PC-9 (cell line): ENCODE measurements at regions of chr9 and their contacts with region 1.

Region 1: DNA sequence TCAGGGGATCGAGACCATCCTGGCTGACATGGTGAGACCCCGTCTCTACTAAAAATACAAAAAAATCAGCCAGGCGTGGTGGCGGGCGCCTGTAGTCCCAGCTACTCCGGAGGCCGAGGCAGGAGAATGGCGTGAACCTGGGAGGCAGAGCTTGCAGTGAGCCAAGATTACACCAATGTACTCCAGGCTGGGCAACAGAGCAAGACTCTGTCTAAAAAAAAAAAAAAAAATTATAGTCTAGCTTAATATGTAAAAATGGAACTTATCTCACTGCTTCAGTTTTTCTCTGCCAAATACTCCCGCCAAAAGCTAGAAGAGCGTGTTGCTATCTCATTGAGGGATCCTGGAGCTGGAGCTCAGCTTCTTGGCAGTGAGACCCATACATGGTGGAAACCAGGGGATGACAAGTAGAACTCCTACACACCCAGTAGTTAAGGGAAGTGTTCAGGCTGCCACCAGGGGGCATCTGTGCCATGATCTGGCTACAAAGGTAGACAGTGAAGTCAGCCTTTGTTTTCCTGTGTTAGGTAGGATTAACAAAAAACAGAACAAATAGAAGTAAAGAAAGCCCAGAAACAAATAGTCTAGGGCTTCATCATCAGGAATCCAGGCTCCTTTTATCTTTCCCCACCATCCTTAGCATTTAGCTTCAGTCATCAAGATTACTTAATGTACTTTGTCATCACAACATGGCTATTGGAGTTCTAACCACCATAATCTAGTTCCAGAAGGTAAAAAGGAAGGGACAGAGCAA is 33.6 kb upstream of the GLIPR2 start:
- DNase-seq: peak; percentile 47 to 52
- H3K4me3 ChIP-seq: no peak overlapping the region
- H3K27ac ChIP-seq: peak overlapping the region; percentile 51
- H3K4me1 ChIP-seq: peaks cover 8% of the 10 kb centered on the region
- H3K27me3 ChIP-seq: no peaks in the 10 kb centered on the region
- CTCF ChIP-seq: peak; percentile 67

Region 2: GRCh38 chr9:35954942-35955546 is 147.9 kb before region 1 on chr9:
- CTCF ChIA-PET with region 1: no interaction called
- POLR2A ChIA-PET with region 1: interaction called, 7 read pairs
- intact Hi-C with region 1: loop called (anchors 5 kb)
- DNase-seq: peak; percentile 30 to 56
- H3K4me3 ChIP-seq: no peak overlapping the region
- H3K27ac ChIP-seq: no peak overlapping the region
- H3K4me1 ChIP-seq: peaks cover 13% of the 10 kb centered on the region
- H3K27me3 ChIP-seq: no peaks in the 10 kb centered on the region
- CTCF ChIP-seq: peak; percentile 77

Region 3: DNA sequence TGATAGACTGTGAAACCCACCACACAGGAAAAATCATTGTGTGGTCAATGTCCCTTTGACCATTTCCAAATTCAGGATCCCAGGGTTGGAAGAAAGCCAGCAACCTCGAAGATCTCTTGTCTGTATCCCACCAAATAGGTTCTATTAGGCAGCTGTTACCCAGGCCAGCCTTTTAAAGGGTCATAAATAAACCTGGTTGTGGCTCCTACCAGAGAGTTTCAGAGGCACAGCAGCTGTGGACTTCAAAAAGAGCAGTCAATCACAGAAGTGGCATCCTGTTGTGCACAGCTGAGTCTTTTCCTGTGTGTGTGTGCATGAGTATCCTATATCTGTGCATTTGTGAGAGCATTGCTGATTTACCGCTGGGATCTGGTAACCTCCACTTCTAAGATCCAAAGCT is 121.2 kb before region 1 on chr9:
- CTCF ChIA-PET with region 1: no interaction called
- POLR2A ChIA-PET with region 1: no interaction called
- intact Hi-C with region 1: no loop called
- DNase-seq: no peak
- H3K4me3 ChIP-seq: no peak overlapping the region
- H3K27ac ChIP-seq: no peak overlapping the region
- H3K4me1 ChIP-seq: no peaks in the 10 kb centered on the region
- H3K27me3 ChIP-seq: no peaks in the 10 kb centered on the region
- CTCF ChIP-seq: no peak

Region 4: GRCh38 chr9:36123515-36123914 is 20.6 kb after region 1 on chr9:
- CTCF ChIA-PET with region 1: no interaction called
- POLR2A ChIA-PET with region 1: no interaction called
- intact Hi-C with region 1: no loop called
- DNase-seq: no peak
- H3K4me3 ChIP-seq: no peak overlapping the region
- H3K27ac ChIP-seq: no peak overlapping the region
- H3K4me1 ChIP-seq: no peaks in the 10 kb centered on the region
- H3K27me3 ChIP-seq: no peaks in the 10 kb centered on the region
- CTCF ChIP-seq: no peak

Region 5: GRCh38 chr9:36141288-36141687 is 38.4 kb after region 1 on chr9:
- CTCF ChIA-PET with region 1: no interaction called
- POLR2A ChIA-PET with region 1: interaction called, 3 read pairs
- intact Hi-C with region 1: loop called (anchors 2 kb)
- DNase-seq: peak; percentile 51 to 70
- H3K4me3 ChIP-seq: no peak overlapping the region
- H3K27ac ChIP-seq: no peak overlapping the region
- H3K4me1 ChIP-seq: peaks cover 13% of the 10 kb centered on the region; the same call in 1 of the 2 replicates
- H3K27me3 ChIP-seq: no peaks in the 10 kb centered on the region
- CTCF ChIP-seq: no peak; the same call in 1 of the 2 replicates

Region 6: DNA sequence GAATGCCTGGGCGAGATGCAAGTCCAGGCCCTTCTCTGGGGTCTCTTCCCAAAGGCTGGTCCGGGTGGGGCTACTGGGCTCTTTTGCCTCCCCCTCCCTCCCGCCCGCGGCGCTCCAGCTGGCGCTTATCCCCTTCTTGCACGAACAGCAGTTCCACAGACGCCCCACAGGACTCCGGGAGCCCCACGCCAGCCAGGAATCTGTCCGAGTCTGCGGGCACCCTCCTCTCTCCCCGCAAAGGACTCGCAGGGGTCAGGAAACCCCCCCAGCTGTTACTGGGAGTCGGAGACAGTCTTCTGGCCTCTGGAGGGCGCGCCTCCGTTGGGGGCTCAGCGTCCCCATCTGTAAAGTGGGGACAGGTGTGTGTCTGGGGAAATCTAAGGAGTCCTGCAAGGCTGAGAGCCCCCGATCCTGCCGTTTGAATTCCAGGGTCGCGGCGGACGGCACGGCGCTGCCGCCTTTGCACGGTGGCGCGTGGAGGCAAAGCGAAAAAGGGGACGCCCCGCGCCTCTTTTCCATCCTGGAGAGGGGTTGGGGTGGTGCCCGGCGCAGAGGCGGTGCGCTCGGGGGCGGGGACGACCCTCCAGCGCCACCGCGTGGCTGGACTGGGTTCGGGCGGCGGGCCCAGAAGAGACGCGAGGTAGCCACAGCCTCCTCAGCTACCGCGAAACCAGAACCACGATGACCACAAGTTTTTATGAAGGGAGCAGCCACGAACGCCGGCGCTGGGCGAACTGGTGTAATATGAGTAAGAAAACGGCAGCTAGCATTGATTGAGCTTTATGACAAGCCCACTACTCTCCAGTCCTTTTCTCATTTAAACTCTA is 63.4 kb after region 1 on chr9:
- CTCF ChIA-PET with region 1: interaction called, 4 read pairs
- POLR2A ChIA-PET with region 1: no interaction called
- intact Hi-C with region 1: loop called (anchors 1 kb)
- DNase-seq: peak; percentile 69 to 81
- H3K4me3 ChIP-seq: peak overlapping the region; percentile 37; the same call in 1 of the 2 replicates
- H3K27ac ChIP-seq: no peak overlapping the region
- H3K4me1 ChIP-seq: 0 out of 2 replicates have a peak, but pooled peaks cover 3% of the 10 kb centered on the region
- H3K27me3 ChIP-seq: no peaks in the 10 kb centered on the region
- CTCF ChIP-seq: peak; percentile 79

Region 7: DNA sequence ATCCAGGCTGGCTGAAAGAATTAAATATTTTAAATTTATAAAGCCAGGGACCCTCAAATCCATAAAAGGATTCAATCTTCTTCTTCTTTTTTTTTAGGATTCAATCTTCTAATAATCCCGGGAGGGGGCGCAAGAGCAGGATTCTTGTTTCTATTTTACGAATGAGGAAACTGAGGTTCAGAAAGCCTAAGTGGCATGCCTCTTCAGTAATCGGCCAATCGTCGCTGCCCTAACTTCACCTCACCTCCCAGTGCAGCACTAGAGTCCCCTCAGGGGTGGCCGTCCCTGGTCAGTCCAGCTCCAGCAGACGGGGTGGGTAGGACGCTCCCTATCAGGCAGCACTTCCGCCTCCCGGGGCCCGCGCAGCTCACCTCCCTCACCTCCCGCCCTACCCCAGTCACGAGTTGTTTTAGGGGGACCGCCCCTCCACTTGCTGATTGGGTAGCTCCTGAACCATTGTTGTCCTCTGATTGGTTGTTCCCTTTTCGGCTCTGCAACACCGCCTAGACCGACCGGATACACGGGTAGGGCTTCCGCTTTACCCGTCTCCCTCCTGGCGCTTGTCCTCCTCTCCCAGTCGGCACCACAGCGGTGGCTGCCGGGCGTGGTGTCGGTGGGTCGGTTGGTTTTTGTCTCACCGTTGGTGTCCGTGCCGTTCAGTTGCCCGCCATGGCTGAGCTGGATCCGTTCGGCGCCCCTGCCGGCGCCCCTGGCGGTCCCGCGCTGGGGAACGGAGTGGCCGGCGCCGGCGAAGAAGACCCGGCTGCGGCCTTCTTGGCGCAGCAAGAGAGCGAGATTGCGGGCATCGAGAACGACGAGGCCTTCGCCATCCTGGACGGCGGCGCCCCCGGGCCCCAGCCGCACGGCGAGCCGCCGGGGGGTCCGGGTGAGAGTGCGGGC is 87.7 kb after region 1 on chr9 and contains the start of gene CLTA:
- CTCF ChIA-PET with region 1: no interaction called
- POLR2A ChIA-PET with region 1: interaction called, 5 read pairs
- intact Hi-C with region 1: loop called (anchors 2 kb)
- DNase-seq: peak; percentile 93 to 94
- H3K4me3 ChIP-seq: peak within 1 kb of the TSS; percentile 91
- H3K27ac ChIP-seq: peak within 1 kb of the TSS; percentile 74
- H3K4me1 ChIP-seq: peaks cover 30% of the 10 kb centered on the region
- H3K27me3 ChIP-seq: no peaks in the 10 kb centered on the region
- CTCF ChIP-seq: peak; percentile 50; the same call in 1 of the 2 replicates
- total RNA-seq, gene CLTA: 146 and 164 TPM in 2 replicates